ENCODE measurements at regions of chr2 and their contacts with region 1.

Region 1: GRCh38 chr2:152466980-152467676 is 132.2 kb downstream of the FMNL2 start:
- DNase-seq: no peak
- ATAC-seq: peak; percentile 75
- H3K4me3 Mint-ChIP-seq: peak overlapping the region; percentile 52
- H3K27ac Mint-ChIP-seq: peak overlapping the region; percentile 73
- H3K4me1 Mint-ChIP-seq: peaks cover 63% of the 10 kb centered on the region
- H3K27me3 Mint-ChIP-seq: no peaks in the 10 kb centered on the region
- CTCF ChIP-seq: no peak

Region 2: GRCh38 chr2:152407204-152407721 is 59.9 kb before region 1 on chr2:
- CTCF ChIA-PET with region 1: no interaction called
- POLR2A ChIA-PET with region 1: interaction called, 4 read pairs
- intact Hi-C with region 1: loop called (anchors 2 kb)
- DNase-seq: no peak
- ATAC-seq: peak; percentile 91
- H3K4me3 Mint-ChIP-seq: peak overlapping the region; percentile 73
- H3K27ac Mint-ChIP-seq: peak overlapping the region; percentile 78
- H3K4me1 Mint-ChIP-seq: peaks cover 31% of the 10 kb centered on the region
- H3K27me3 Mint-ChIP-seq: no peaks in the 10 kb centered on the region
- CTCF ChIP-seq: no peak

Region 3: GRCh38 chr2:152497481-152498052 is 30.4 kb after region 1 on chr2:
- CTCF ChIA-PET with region 1: no interaction called
- POLR2A ChIA-PET with region 1: interaction called, 3 read pairs
- intact Hi-C with region 1: loop called (anchors 5 kb)
- DNase-seq: no peak
- ATAC-seq: peak; percentile 28
- H3K4me3 Mint-ChIP-seq: no peak overlapping the region
- H3K27ac Mint-ChIP-seq: no peak overlapping the region
- H3K4me1 Mint-ChIP-seq: peaks cover 48% of the 10 kb centered on the region
- H3K27me3 Mint-ChIP-seq: no peaks in the 10 kb centered on the region
- CTCF ChIP-seq: no peak